AG04450 (cell line): ENCODE measurements at regions of chr20 and their contacts with region 1.

Region 1: GRCh38 chr20:4949833-4950178 is 51.5 kb downstream of the SLC23A2 start:
- DNase-seq: no peak
- H3K4me3 ChIP-seq: no peak overlapping the region
- H3K27ac ChIP-seq: no peak overlapping the region
- H3K27me3 ChIP-seq: no peaks in the 10 kb centered on the region
- CTCF ChIP-seq: peak; percentile 78

Region 2: DNA sequence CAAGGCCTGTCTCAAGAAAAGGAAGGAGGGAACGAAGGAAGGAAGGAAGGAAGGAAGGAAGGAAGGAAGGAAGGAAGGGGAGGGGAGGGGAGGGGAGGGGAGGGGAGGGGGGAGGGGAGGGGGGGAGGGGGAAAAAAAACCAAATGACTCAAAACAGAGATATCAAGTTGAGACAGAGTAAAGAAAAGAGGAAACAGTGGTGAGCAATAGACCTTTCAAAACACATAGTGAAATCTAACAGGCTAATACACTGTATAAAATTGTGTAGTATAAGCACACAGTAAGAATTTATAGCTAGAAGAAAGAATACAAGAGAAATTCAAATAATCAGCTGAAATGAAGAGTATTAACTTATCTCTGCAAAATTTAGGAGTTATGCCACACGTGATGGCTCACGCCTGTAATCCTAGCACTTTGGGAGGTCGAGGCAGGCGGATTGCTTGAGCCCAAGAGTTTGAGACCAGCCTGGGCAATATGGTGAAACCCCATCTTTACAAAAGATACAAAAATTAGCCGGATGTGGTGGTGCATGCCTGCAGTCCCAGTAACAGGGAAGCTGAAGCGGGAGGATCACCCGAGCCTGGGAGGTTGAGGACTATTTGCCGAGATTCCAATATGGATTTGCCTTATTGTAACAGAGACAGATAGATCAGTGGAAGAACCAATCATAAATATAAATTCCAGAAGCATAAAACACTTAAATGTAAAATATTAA is 104.9 kb before region 1 on chr20:
- CTCF ChIA-PET with region 1: no interaction called
- POLR2A ChIA-PET with region 1: no interaction called
- DNase-seq: no peak
- H3K4me3 ChIP-seq: no peak overlapping the region
- H3K27ac ChIP-seq: no peak overlapping the region
- H3K27me3 ChIP-seq: peaks cover 4% of the 10 kb centered on the region
- CTCF ChIP-seq: no peak

Region 3: DNA sequence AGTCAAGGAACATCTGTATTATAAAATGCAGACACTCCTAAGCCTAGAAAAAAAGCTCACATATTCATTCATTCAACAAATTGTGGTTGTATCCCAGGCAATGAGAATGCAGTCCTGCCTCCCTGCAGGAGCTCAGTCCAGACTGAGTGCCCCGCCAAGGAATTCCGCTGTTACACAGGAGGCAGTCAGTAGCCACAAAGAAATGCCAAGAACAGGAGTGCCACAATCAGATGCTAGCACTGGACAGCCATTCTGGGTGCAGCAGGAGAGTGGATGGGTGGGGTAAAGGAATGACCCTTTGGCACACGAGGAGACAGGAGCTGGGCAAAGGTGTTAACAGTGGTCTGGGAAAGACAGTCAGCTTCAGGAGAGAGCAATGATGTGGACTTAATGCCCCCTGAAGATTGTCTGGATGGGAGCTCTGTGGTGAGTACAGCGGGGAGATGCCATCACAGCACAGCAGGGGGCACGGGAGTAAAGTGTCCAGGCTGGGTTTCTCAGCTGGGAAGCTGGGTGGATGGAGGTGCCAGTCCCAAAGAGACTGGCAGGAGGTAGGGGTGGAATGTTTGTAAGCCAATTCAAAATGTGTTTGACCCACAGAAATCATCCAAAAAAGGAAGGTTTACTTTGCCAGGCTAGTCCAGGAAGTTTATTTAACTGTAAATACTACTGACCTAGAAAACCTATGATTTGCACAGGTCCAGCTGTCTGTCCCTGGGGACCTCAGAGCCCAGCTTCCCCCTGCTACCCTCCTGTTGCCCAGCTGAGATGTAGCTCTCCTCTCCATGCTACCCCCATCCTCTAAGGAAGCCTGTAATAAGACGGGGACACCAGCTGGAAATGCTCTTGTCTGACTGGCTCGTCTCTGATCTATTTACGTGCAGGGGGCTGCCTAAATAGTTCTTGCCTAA is 32.6 kb before region 1 on chr20:
- CTCF ChIA-PET with region 1: interaction called, 15 read pairs
- POLR2A ChIA-PET with region 1: no interaction called
- DNase-seq: no peak
- H3K4me3 ChIP-seq: no peak overlapping the region
- H3K27ac ChIP-seq: no peak overlapping the region
- H3K27me3 ChIP-seq: no peaks in the 10 kb centered on the region
- CTCF ChIP-seq: peak; percentile 25; the same call in 1 of the 2 replicates